Activated CD4-positive, alpha-beta memory T cell treated with anti-CD3 and anti-CD28 coated beads, Interleukin-2, amount 10 ng/mL, durations not matched to agents 7 days and 5 days (primary cell): ENCODE measurements at regions of chr3 and their contacts with region 1.

Region 1: DNA sequence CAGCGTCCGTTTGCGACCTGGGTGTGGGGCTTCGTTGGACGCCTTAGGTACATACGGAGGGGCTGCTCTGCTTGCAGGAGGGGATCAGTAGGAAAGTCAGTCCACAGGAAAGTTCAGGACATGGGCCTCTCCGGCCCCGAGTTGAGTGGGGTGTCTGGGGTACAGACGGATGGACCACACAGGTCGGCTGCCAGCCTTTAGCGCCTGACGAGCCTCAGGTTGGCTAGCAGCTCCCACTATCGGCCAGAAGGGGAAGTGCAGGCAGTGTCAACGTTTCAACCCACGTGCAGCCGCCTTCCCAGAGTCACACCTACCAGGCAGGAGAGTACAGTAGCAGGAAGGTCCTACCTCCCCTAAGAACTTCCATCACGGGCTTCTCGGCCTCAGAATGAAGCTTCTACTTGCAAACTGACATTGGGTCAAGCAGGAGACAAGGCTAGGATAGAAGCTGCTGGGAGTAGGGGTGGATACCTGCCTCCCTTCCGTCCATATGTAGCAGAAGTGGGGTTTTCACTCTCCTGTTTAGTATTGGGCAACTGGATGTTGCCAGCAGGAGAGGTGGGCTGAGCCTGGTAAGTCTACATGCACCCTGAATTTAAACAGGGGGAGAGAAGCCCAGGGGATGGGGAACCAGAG is 1.8 kb upstream of the SCN5A start:
- DNase-seq: peak; percentile 73
- H3K4me3 Mint-ChIP-seq: no peak overlapping the region
- H3K27ac Mint-ChIP-seq: no peak overlapping the region
- H3K4me1 Mint-ChIP-seq: peaks cover 7% of the 10 kb centered on the region
- H3K27me3 Mint-ChIP-seq: peaks cover 19% of the 10 kb centered on the region

Region 2: DNA sequence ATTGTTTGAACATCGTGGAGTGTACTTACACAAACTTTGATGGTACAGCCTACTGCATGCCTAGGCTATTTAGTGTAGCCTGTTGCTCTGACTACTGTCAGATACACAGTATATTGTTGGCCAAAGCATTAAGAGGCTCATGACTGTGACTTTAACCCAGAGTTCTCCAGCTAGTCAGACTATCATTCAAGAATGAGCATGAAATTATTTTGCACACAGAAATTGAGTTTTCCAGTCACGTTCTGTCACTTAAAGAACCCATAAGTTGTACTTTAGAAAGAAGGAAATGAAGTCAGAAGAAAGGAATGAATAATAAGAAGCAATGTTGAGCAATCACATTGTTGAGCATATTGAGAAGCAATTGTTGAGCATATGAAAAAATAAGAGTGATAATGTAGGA is 423.3 kb before region 1 on chr3:
- CTCF ChIA-PET with region 1: no interaction called
- POLR2A ChIA-PET with region 1: no interaction called
- DNase-seq: no peak
- H3K4me3 Mint-ChIP-seq: no peak overlapping the region
- H3K27ac Mint-ChIP-seq: no peak overlapping the region
- H3K4me1 Mint-ChIP-seq: peaks cover 3% of the 10 kb centered on the region
- H3K27me3 Mint-ChIP-seq: no peaks in the 10 kb centered on the region

Region 3: GRCh38 chr3:38496131-38496910 is 155.0 kb before region 1 on chr3 and contains the start of gene EXOG:
- CTCF ChIA-PET with region 1: interaction called, 21 read pairs
- POLR2A ChIA-PET with region 1: no interaction called
- DNase-seq: peak; percentile 95
- H3K4me3 Mint-ChIP-seq: peak within 1 kb of the TSS; percentile 94
- H3K27ac Mint-ChIP-seq: peak within 1 kb of the TSS; percentile 79
- H3K4me1 Mint-ChIP-seq: peaks cover 30% of the 10 kb centered on the region
- H3K27me3 Mint-ChIP-seq: no peaks in the 10 kb centered on the region
- total RNA-seq, gene EXOG: 17.8 to 19.0 TPM

Region 4: GRCh38 chr3:38636464-38636863 is 14.8 kb before region 1 on chr3:
- CTCF ChIA-PET with region 1: interaction called, 11 read pairs
- POLR2A ChIA-PET with region 1: no interaction called
- DNase-seq: no peak
- H3K4me3 Mint-ChIP-seq: no peak overlapping the region
- H3K27ac Mint-ChIP-seq: no peak overlapping the region
- H3K4me1 Mint-ChIP-seq: peaks cover 3% of the 10 kb centered on the region
- H3K27me3 Mint-ChIP-seq: peaks cover 5% of the 10 kb centered on the region

Region 5: DNA sequence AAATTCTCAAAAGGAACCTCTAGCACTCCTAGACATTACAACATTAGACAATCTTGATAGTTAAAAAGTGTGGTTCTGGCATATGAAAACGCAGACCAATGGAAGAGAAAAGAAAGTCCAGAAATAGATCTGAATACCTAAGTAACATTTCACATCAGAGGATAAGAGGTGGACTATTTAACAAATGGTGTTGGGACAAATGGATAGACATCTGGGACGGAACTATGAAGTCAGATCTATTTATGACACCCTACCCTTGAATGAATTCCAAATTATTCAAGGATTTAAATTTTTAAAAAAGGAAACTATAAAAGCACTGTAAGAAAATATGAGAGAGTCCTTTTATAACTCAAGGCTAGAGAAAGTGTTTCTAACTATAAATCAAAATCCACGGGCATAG is 289.1 kb after region 1 on chr3:
- CTCF ChIA-PET with region 1: no interaction called
- POLR2A ChIA-PET with region 1: no interaction called
- DNase-seq: no peak
- H3K4me3 Mint-ChIP-seq: no peak overlapping the region
- H3K27ac Mint-ChIP-seq: no peak overlapping the region
- H3K4me1 Mint-ChIP-seq: no peaks in the 10 kb centered on the region
- H3K27me3 Mint-ChIP-seq: peaks cover 4% of the 10 kb centered on the region